ENCODE measurements at regions of chr3 and their contacts with region 1.

Region 1: DNA sequence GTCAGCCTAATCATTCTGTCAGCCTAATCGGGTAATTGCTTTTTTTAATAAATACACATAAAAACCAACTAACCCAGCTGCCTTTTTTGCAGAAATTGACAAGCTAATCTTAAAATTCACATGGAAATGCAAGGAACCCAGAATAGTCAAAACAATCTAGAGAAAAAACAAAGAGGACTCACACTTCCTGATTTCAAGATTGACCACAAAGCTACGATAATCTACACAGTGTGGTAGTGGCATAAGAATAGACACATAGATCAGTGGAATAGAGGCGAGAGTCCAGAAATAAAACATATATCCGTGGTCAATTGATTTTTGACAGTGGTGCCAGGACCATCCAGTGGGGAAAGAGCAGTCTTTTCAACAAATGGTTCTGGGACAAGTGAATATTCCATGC is 2.4 kb upstream of the C3orf20 start:
- DNase-seq: no peak
- ATAC-seq: no peak
- H3K4me3 ChIP-seq: no peak overlapping the region
- H3K27ac ChIP-seq: no peak overlapping the region
- H3K4me1 ChIP-seq: no peaks in the 10 kb centered on the region
- H3K27me3 ChIP-seq: no peaks in the 10 kb centered on the region
- CTCF ChIP-seq: no peak

Region 2: GRCh38 chr3:14303336-14304100 is 369.1 kb before region 1 on chr3:
- CTCF ChIA-PET with region 1: no interaction called
- POLR2A ChIA-PET with region 1: no interaction called
- in situ Hi-C with region 1: no loop called
- intact Hi-C with region 1: no loop called
- DNase-seq: no peak
- ATAC-seq: no peak
- H3K4me3 ChIP-seq: no peak overlapping the region
- H3K27ac ChIP-seq: no peak overlapping the region
- H3K4me1 ChIP-seq: no peaks in the 10 kb centered on the region
- H3K27me3 ChIP-seq: no peaks in the 10 kb centered on the region
- CTCF ChIP-seq: no peak

Region 3: DNA sequence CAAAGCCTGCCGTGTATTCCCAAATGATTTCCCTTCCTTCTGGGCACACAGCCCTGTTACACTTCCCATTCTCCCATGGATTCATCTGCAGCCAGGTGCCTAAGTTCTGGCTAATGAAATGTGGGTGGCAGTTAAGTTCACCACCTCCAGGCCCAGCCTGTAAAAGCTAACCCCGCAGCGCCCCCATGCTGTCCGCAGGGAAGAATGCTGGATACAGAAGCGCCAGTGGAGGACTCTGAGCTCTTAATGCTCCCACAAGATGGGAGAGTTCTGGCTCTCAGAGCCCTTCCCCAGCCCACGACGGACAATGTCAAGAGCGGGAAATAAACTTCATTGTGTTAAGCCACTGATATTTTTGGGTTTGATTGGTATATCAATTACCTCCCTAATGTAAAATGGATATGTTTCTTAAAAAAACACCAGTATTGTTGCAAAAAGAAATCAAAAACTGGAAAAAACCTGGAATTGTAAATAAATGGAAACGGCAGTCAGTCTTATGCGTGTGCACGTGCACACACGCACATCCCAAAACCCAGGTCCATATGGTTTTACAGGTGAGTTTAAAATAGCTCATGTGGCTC is 108.4 kb after region 1 on chr3:
- CTCF ChIA-PET with region 1: interaction called, 16 read pairs
- POLR2A ChIA-PET with region 1: interaction called, 3 read pairs
- in situ Hi-C with region 1: no loop called
- intact Hi-C with region 1: loop called (anchors 2 kb)
- DNase-seq: peak; percentile 41
- ATAC-seq: peak; percentile 99
- H3K4me3 ChIP-seq: no peak overlapping the region
- H3K27ac ChIP-seq: no peak overlapping the region
- H3K4me1 ChIP-seq: no peaks in the 10 kb centered on the region
- H3K27me3 ChIP-seq: no peaks in the 10 kb centered on the region
- CTCF ChIP-seq: peak; percentile 83